CD4-positive, alpha-beta T cell (primary cell): ENCODE measurements at regions of chr17 and their contacts with region 1.

Region 1: GRCh38 chr17:82332669-82333278 is 792 bp downstream of the SECTM1 start:
- DNase-seq: peak in 6 of 14 experiments; percentile 20 to 77 (median 40)
- ATAC-seq: peak; percentile 57
- H3K4me3 ChIP-seq: peak overlapping the region; percentile 63
- H3K4me3 Mint-ChIP-seq: peak overlapping the region; percentile 93
- H3K27ac ChIP-seq: no peak overlapping the region
- H3K27ac Mint-ChIP-seq: peak overlapping the region; percentile 57
- H3K4me1 ChIP-seq: peaks cover 39% of the 10 kb centered on the region
- H3K4me1 Mint-ChIP-seq: peaks cover 13% of the 10 kb centered on the region
- H3K27me3 ChIP-seq: peaks cover 0 to 8% of the 10 kb centered on the region in 2 experiments
- H3K27me3 Mint-ChIP-seq: peaks cover 4% of the 10 kb centered on the region
- CTCF ChIP-seq: no peak

Region 2: DNA sequence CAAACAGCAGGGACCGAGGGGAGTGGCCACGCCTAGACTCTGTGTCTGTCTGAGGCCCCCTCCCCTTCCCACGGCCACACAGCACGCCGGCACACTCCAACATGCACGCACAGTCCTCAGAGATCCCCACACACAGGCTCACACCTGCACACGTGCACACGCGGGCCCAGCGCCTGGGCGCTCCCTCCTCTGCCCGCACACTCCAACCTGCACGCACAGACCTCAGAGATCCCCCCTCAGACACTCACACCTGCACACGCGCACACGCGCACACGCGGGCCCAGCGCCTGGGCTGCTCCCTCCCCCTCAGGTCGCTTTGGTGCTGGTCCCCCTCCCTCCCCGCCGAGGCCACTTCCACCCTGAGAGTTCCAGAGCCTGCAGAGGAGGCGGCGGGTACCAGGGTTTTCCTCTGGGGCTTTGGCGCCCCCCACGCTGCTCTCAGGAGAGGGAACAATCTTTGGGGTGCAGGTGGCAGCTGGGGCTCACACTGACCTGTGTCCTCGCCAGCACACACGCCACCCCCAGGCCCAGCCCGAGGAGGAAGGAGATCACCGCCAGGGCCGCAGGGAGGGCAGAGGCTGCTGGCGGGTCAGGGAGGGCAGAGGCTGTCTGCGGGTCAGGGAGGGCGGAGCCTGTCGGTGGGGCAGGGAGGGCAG is 16.9 kb before region 1 on chr17:
- CTCF ChIA-PET with region 1: interaction called, 5 read pairs
- POLR2A ChIA-PET with region 1: interaction called, 16 read pairs
- intact Hi-C with region 1: no loop called
- DNase-seq: peak in 11 of 14 experiments; percentile 43 to 78 (median 68)
- ATAC-seq: peak; percentile 45
- H3K4me3 ChIP-seq: peak overlapping the region; percentile 81
- H3K4me3 Mint-ChIP-seq: peak overlapping the region; percentile 99
- H3K27ac ChIP-seq: peak overlapping the region; percentile 31 to 80
- H3K27ac Mint-ChIP-seq: no peak overlapping the region
- H3K4me1 ChIP-seq: peaks cover 58% of the 10 kb centered on the region
- H3K4me1 Mint-ChIP-seq: peaks cover 25% of the 10 kb centered on the region
- H3K27me3 ChIP-seq: no peaks in the 10 kb centered on the region
- H3K27me3 Mint-ChIP-seq: no peaks in the 10 kb centered on the region
- CTCF ChIP-seq: no peak

Region 3: GRCh38 chr17:83079352-83079747 is 746.6 kb after region 1 on chr17 and contains the start of gene METRNL:
- CTCF ChIA-PET with region 1: no interaction called
- POLR2A ChIA-PET with region 1: no interaction called
- intact Hi-C with region 1: no loop called
- DNase-seq: peak in 13 of 14 experiments; percentile 27 to 77 (median 50)
- ATAC-seq: peak; percentile 37
- H3K4me3 ChIP-seq: peak within 1 kb of the TSS; percentile 45
- H3K4me3 Mint-ChIP-seq: peak within 1 kb of the TSS; percentile 58
- H3K27ac ChIP-seq: no peak within 1 kb of the TSS
- H3K27ac Mint-ChIP-seq: no peak within 1 kb of the TSS
- H3K4me1 ChIP-seq: peaks cover 43% of the 10 kb centered on the region
- H3K4me1 Mint-ChIP-seq: peaks cover 7% of the 10 kb centered on the region
- H3K27me3 ChIP-seq: peaks cover 10 to 12% of the 10 kb centered on the region in 2 experiments
- H3K27me3 Mint-ChIP-seq: peaks cover 23% of the 10 kb centered on the region
- CTCF ChIP-seq: no peak
- total RNA-seq, gene METRNL: 24.5 to 26.9 TPM